Psoas muscle (tissue), 8 donors: ENCODE measurements at regions of chr12 and their contacts with region 1.

Region 1: GRCh38 chr12:46983393-46984266 is 95.8 kb upstream of the PCED1B start:
- DNase-seq: no peak
- ATAC-seq: peak; percentile 81 to 95 (median 87)
- H3K4me3 ChIP-seq: no peak overlapping the region
- H3K27ac ChIP-seq: no peak overlapping the region
- H3K4me1 ChIP-seq: no peaks in the 10 kb centered on the region
- H3K27me3 ChIP-seq: no peaks in the 10 kb centered on the region
- CTCF ChIP-seq: peak; percentile 80

Region 2: GRCh38 chr12:46946137-46946536 is 37.5 kb before region 1 on chr12:
- intact Hi-C with region 1: loop called in 1 of 2 experiments (anchors 5 kb)
- DNase-seq: no peak
- ATAC-seq: no peak
- H3K4me3 ChIP-seq: no peak overlapping the region
- H3K27ac ChIP-seq: no peak overlapping the region
- H3K4me1 ChIP-seq: peaks cover 10% of the 10 kb centered on the region
- H3K27me3 ChIP-seq: no peaks in the 10 kb centered on the region
- CTCF ChIP-seq: no peak

Region 3: DNA sequence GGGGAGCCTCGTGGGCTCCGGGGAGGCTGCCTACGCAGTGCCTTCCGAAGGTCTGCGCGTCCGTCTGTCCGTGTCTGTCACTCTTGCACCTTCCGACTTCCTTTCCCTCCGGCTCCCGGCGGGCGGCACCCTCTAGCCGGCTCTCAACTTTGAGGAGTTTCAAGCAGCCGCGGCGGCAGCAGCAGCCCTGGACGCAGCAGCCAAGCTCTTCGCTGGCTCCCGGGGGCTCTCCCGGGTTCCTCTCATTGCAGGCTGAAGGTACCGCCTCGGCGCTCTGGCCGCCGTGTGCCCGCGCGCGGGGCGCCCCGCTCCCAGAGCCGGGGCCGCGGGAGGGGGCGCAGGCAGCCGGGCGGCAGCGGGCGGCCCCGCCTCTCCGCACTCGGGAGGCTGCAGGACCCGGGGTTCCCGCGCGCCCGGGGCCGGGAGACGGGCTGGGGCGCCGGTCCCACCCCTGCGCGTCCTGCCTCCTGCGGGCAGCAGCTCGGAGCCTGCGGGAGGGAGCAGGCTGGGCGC is 95.9 kb after region 1 on chr12 and contains the starts of genes AMIGO2 and PCED1B:
- intact Hi-C with region 1: no loop called
- DNase-seq: peak; percentile 70 to 86
- ATAC-seq: peak; percentile 56 to 74 (median 66)
- H3K4me3 ChIP-seq: peak within 1 kb of the TSS; percentile 71
- H3K27ac ChIP-seq: peak within 1 kb of the TSS; percentile 63
- H3K4me1 ChIP-seq: peaks cover 13% of the 10 kb centered on the region
- H3K27me3 ChIP-seq: peaks cover 2 to 33% (median 3%) of the 10 kb centered on the region in 3 donors
- CTCF ChIP-seq: peak; percentile 16
- total RNA-seq, gene AMIGO2: 0.48 to 1.1 (median 0.59) TPM
- total RNA-seq, gene PCED1B: 0.19 to 1.2 (median 0.69) TPM